B cell (primary cell): ENCODE measurements at regions of chr6 and their contacts with region 1.

Region 1: GRCh38 chr6:15245361-15246216 is at the start of gene JARID2:
- DNase-seq: peak; percentile 98
- ATAC-seq: peak; percentile 58
- H3K4me3 ChIP-seq: peak within 1 kb of the TSS; percentile 76 to 100 (median 96)
- H3K4me3 Mint-ChIP-seq: peak within 1 kb of the TSS; percentile 97
- H3K27ac ChIP-seq: peak within 1 kb of the TSS; percentile 83 to 86
- H3K27ac Mint-ChIP-seq: peak within 1 kb of the TSS; percentile 96
- H3K4me1 ChIP-seq: peaks cover 13 to 19% of the 10 kb centered on the region in 2 donors
- H3K4me1 Mint-ChIP-seq: peaks cover 26% of the 10 kb centered on the region
- H3K27me3 ChIP-seq: no peaks in the 10 kb centered on the region
- H3K27me3 Mint-ChIP-seq: no peaks in the 10 kb centered on the region
- CTCF ChIP-seq: no peak
- total RNA-seq, gene JARID2: 58.1 and 59.0 TPM in 2 replicates

Region 2: GRCh38 chr6:13614926-13615798 is 1630.4 kb before region 1 on chr6 and contains the start of gene NOL7:
- CTCF ChIA-PET with region 1: no interaction called
- POLR2A ChIA-PET with region 1: no interaction called
- intact Hi-C with region 1: loop called (anchors 5 kb)
- DNase-seq: peak; percentile 99
- ATAC-seq: peak; percentile 93
- H3K4me3 ChIP-seq: peak within 1 kb of the TSS; percentile 79 to 94 (median 93)
- H3K4me3 Mint-ChIP-seq: peak within 1 kb of the TSS; percentile 97
- H3K27ac ChIP-seq: peak within 1 kb of the TSS; percentile 73 to 82
- H3K27ac Mint-ChIP-seq: peak within 1 kb of the TSS; percentile 97
- H3K4me1 ChIP-seq: peaks cover 16 to 22% of the 10 kb centered on the region in 2 donors
- H3K4me1 Mint-ChIP-seq: peaks cover 46% of the 10 kb centered on the region
- H3K27me3 ChIP-seq: no peaks in the 10 kb centered on the region
- H3K27me3 Mint-ChIP-seq: no peaks in the 10 kb centered on the region
- CTCF ChIP-seq: peak; percentile 86
- total RNA-seq, gene NOL7: 48.6 and 58.3 TPM in 2 replicates

Region 3: DNA sequence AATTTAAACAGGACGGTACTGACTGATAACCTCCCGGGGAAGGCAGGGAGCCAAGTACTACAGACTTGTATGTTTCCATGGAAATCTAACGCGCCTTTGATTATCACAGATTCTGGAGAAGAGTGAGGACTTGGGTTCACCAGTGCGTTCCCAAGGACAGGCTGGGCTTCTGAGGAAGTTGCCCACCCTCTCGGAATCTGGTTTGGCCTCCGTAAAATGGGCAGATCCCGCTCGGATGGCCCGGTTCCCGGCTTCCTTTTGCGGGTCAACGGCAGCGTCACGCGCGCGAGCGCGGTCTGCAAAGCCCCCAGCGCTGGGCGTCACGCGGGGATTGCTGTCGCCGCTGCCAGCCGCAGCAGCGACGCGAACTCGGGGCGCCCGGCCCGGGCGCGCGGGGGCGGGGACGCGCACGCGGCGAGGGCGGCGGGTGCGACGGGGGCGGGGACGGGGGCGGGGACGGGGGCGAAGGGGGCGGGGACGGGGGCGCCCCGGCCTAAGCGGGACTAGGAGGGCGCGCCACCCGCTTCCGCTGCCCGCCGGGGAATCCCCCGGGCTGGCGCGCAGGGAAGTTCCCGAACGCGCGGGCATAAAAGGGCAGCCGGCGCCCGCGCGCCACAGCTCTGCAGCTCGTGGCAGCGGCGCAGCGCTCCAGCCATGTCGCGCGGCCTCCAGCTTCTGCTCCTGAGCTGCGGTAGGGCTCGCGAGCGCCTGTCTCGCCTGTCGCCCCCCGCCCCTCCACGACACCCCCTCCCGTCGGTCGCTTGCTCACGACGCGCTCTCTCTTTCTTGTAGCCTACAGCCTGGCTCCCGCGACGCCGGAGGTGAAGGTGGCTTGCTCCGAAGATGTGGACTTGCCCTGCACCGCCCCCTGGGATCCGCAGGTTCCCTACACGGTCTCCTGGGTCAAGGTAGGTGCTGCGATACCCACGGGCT is 1128.2 kb before region 1 on chr6 and contains the start of gene CD83:
- CTCF ChIA-PET with region 1: no interaction called
- POLR2A ChIA-PET with region 1: no interaction called
- intact Hi-C with region 1: loop called (anchors 5 kb)
- DNase-seq: peak; percentile 97
- ATAC-seq: peak; percentile 80
- H3K4me3 ChIP-seq: peak within 1 kb of the TSS; percentile 75 to 100 (median 94)
- H3K4me3 Mint-ChIP-seq: peak within 1 kb of the TSS; percentile 93
- H3K27ac ChIP-seq: peak within 1 kb of the TSS; percentile 99
- H3K27ac Mint-ChIP-seq: peak within 1 kb of the TSS; percentile 97
- H3K4me1 ChIP-seq: peaks cover 37 to 44% of the 10 kb centered on the region in 2 donors
- H3K4me1 Mint-ChIP-seq: peaks cover 37% of the 10 kb centered on the region
- H3K27me3 ChIP-seq: no peaks in the 10 kb centered on the region
- H3K27me3 Mint-ChIP-seq: no peaks in the 10 kb centered on the region
- CTCF ChIP-seq: no peak
- total RNA-seq, gene CD83: 332 and 339 TPM in 2 replicates

Region 4: DNA sequence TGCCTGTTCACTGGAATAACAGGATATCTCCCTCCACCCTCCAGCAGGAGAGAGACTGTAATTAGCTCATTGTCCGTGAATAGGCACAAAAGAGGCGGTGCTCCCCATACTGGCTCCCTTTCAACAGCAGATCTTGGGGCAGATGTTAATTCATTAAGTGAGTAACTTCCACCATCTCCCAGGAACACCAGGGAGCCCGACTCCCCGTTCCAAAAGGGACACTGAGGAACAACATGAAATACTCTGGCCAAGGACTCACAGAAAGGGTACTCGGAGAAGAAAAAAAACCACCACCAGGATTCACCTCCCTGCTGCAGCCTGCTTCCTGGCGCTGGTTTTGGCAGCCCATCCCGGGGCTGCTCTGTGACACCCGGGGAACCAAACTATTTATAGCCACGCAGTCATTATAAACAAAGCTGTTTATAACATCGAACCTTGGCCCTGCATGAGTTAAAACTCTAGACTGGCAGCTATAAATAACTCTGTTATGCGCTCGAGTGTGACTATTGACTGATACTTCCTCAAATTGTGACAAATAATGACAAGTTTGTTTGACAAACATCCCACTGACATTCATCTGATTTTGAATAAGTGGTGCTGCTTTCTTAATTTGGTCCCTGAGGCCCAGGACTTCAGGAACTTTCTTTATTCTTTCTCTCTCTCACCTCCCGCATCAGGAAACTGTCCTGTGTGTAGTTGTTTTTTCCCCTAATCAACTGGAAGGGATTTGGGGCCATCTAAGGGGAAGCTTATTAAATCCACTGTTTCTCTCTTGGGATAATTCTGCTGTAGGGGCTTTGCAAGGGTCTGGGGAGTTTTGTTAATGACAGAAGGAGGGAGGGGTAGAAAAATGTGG is 606.5 kb before region 1 on chr6:
- CTCF ChIA-PET with region 1: no interaction called
- POLR2A ChIA-PET with region 1: no interaction called
- intact Hi-C with region 1: loop called (anchors 2 kb)
- DNase-seq: peak; percentile 79
- ATAC-seq: peak; percentile 60
- H3K4me3 ChIP-seq: peak overlapping the region; percentile 21 to 74 (median 25)
- H3K4me3 Mint-ChIP-seq: peak overlapping the region; percentile 85
- H3K27ac ChIP-seq: peak overlapping the region; percentile 94
- H3K27ac Mint-ChIP-seq: peak overlapping the region; percentile 98
- H3K4me1 ChIP-seq: peaks cover 77 to 81% of the 10 kb centered on the region in 2 donors
- H3K4me1 Mint-ChIP-seq: peaks cover 87% of the 10 kb centered on the region
- H3K27me3 ChIP-seq: no peaks in the 10 kb centered on the region
- H3K27me3 Mint-ChIP-seq: no peaks in the 10 kb centered on the region
- CTCF ChIP-seq: no peak

Region 5: DNA sequence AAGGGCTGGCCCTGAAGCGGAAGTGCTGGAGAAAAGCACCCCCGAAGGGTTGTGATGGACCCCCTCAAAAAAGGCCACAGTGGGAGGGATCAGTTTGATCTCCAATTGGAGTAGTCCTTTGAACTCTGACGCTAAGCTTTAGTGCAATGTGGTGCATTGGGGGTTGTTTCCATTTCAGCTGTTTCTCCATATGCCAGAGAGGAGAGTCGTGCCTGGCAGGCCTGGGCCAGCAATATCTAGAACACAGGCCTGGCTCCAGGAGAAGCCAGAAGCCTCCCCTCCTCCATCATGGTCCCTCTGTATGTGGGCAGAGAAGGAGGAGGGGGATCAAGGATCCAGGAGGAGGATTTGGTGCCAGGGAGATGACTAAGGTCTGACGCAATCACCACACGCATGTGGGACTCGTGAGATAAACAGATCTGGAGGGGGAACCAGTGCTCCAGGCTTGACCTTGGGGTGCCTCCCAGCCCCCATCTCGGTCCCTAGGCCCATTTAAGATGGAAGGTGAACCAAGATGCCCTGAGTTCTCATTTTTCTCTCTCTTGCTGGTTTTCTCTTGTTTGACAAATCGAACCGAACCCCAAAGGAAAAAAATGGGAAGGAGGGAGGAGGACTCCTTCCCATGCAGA is 517.1 kb before region 1 on chr6:
- CTCF ChIA-PET with region 1: interaction called, 3 read pairs
- POLR2A ChIA-PET with region 1: no interaction called
- intact Hi-C with region 1: loop called (anchors 5 kb)
- DNase-seq: no peak
- ATAC-seq: no peak
- H3K4me3 ChIP-seq: peak overlapping the region in 1 of 5 experiments; percentile 15
- H3K4me3 Mint-ChIP-seq: peak overlapping the region; percentile 75
- H3K27ac ChIP-seq: peak overlapping the region; percentile 96 to 97
- H3K27ac Mint-ChIP-seq: peak overlapping the region; percentile 96
- H3K4me1 ChIP-seq: peaks cover 68 to 69% of the 10 kb centered on the region in 2 donors
- H3K4me1 Mint-ChIP-seq: peaks cover 81% of the 10 kb centered on the region
- H3K27me3 ChIP-seq: no peaks in the 10 kb centered on the region
- H3K27me3 Mint-ChIP-seq: no peaks in the 10 kb centered on the region
- CTCF ChIP-seq: no peak

Region 6: DNA sequence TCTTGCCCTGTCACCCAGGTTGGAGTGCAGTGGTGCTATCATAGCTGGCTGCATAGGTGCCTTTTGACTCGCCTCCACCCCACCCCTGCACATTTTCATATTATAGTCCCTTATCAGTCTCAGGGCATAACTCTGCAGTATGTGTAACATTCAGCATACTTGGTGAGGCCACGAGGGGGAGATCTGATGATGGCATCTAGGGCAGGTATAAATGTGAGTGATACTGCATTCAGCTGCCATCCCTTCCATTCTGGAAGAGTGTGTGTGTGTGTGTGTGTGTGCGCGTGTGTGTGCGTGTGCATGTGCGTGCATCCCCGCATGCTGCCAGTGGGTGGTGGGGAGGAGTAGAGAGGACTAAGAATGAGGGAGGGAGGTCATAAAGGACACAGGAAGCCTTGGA is 81.7 kb after region 1 on chr6:
- CTCF ChIA-PET with region 1: no interaction called
- POLR2A ChIA-PET with region 1: interaction called, 5 read pairs
- intact Hi-C with region 1: loop called (anchors 5 kb)
- DNase-seq: peak; percentile 60
- ATAC-seq: peak; percentile 62
- H3K4me3 ChIP-seq: no peak overlapping the region
- H3K4me3 Mint-ChIP-seq: peak overlapping the region; percentile 60
- H3K27ac ChIP-seq: peak overlapping the region in 1 of 2 donors; percentile 38
- H3K27ac Mint-ChIP-seq: peak overlapping the region; percentile 78
- H3K4me1 ChIP-seq: peaks cover 76% of the 10 kb centered on the region in 2 donors
- H3K4me1 Mint-ChIP-seq: peaks cover 91% of the 10 kb centered on the region
- H3K27me3 ChIP-seq: no peaks in the 10 kb centered on the region
- H3K27me3 Mint-ChIP-seq: no peaks in the 10 kb centered on the region
- CTCF ChIP-seq: peak; percentile 19

Region 7: GRCh38 chr6:15662326-15663129 is 416.9 kb after region 1 on chr6 and contains the start of gene DTNBP1:
- CTCF ChIA-PET with region 1: no interaction called
- POLR2A ChIA-PET with region 1: no interaction called
- intact Hi-C with region 1: loop called (anchors 2 kb)
- DNase-seq: peak; percentile 95
- ATAC-seq: peak; percentile 73
- H3K4me3 ChIP-seq: peak within 1 kb of the TSS; percentile 50 to 97 (median 78)
- H3K4me3 Mint-ChIP-seq: peak within 1 kb of the TSS; percentile 94
- H3K27ac ChIP-seq: peak within 1 kb of the TSS; percentile 91 to 97
- H3K27ac Mint-ChIP-seq: peak within 1 kb of the TSS; percentile 95
- H3K4me1 ChIP-seq: peaks cover 36 to 49% of the 10 kb centered on the region in 2 donors
- H3K4me1 Mint-ChIP-seq: peaks cover 51% of the 10 kb centered on the region
- H3K27me3 ChIP-seq: no peaks in the 10 kb centered on the region
- H3K27me3 Mint-ChIP-seq: no peaks in the 10 kb centered on the region
- CTCF ChIP-seq: no peak
- total RNA-seq, gene DTNBP1: 73.0 and 73.6 TPM in 2 replicates